ENCODE measurements at regions of chr19 and their contacts with region 1.

Region 1: DNA sequence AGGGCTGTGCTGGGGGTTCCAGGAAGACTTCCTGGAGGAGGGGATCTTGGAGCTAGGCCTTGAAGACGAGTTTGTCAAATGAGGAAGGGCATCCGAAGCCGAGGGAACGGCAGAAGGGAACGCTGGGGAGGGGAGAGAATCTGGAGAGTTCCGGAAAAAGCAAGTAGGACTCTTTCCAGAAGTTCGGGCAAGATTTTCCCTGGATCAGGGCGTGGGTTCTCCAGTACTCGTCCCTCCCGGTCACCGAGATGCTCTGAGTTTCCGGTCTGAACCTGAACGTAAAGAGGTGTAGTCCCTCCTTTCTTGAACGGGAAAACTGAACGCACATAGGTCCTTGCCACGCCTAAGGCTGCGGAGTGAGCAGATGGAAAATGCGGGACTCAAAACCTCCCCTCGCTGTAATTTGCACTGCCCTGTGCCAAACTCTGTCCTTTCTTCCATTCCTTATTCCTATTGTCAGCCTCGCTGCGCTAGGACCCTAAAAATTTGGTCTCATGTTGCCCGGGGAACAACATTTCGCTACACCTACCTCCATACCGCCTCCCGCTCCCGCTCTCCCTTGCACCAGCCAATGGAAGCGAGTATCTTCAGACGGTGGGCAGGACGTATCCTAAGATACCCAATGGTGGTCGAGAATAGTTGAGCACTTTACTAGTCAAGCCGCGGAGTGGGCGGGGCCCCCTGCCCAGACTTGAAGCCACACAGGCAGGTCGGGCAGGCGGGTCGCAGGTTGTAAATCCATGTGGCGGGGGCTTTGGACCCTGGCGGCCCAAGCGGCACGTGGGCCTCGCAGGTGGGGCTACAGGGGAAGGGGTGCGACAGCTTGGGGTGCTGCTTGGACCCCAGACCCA is at the start of gene GTPBP3:
- DNase-seq: peak; percentile 98
- H3K4me3 Mint-ChIP-seq: peak within 1 kb of the TSS; percentile 88
- H3K27ac Mint-ChIP-seq: peak within 1 kb of the TSS; percentile 93
- H3K4me1 Mint-ChIP-seq: peaks cover 28% of the 10 kb centered on the region
- H3K27me3 Mint-ChIP-seq: no peaks in the 10 kb centered on the region
- total RNA-seq, gene GTPBP3: 36.8 to 45.7 TPM

Region 2: GRCh38 chr19:17170538-17171297 is 166.4 kb before region 1 on chr19:
- CTCF ChIA-PET with region 1: no interaction called
- intact Hi-C with region 1: no loop called
- DNase-seq: peak; percentile 76
- H3K4me3 Mint-ChIP-seq: no peak overlapping the region
- H3K27ac Mint-ChIP-seq: peak overlapping the region; percentile 87
- H3K4me1 Mint-ChIP-seq: peaks cover 18% of the 10 kb centered on the region
- H3K27me3 Mint-ChIP-seq: no peaks in the 10 kb centered on the region

Region 3: GRCh38 chr19:17292286-17293097 is 44.6 kb before region 1 on chr19:
- CTCF ChIA-PET with region 1: interaction called, 3 read pairs
- intact Hi-C with region 1: loop called (anchors 2 kb)
- DNase-seq: peak; percentile 88
- H3K4me3 Mint-ChIP-seq: peak overlapping the region; percentile 87
- H3K27ac Mint-ChIP-seq: peak overlapping the region; percentile 56
- H3K4me1 Mint-ChIP-seq: peaks cover 8% of the 10 kb centered on the region
- H3K27me3 Mint-ChIP-seq: no peaks in the 10 kb centered on the region

Region 4: GRCh38 chr19:17419621-17420466 is 82.7 kb after region 1 on chr19 and contains the start of gene MVB12A:
- CTCF ChIA-PET with region 1: no interaction called
- intact Hi-C with region 1: loop called (anchors 1 kb)
- DNase-seq: peak; percentile 98
- H3K4me3 Mint-ChIP-seq: peak within 1 kb of the TSS; percentile 87
- H3K27ac Mint-ChIP-seq: peak within 1 kb of the TSS; percentile 87
- H3K4me1 Mint-ChIP-seq: peaks cover 16% of the 10 kb centered on the region
- H3K27me3 Mint-ChIP-seq: no peaks in the 10 kb centered on the region
- total RNA-seq, gene MVB12A: 29.3 to 32.1 TPM

Region 5: GRCh38 chr19:17755977-17756670 is 419.0 kb after region 1 on chr19:
- CTCF ChIA-PET with region 1: no interaction called
- intact Hi-C with region 1: loop called (anchors 10 kb)
- DNase-seq: peak; percentile 52
- H3K4me3 Mint-ChIP-seq: no peak overlapping the region
- H3K27ac Mint-ChIP-seq: no peak overlapping the region
- H3K4me1 Mint-ChIP-seq: peaks cover 44% of the 10 kb centered on the region
- H3K27me3 Mint-ChIP-seq: no peaks in the 10 kb centered on the region